HEK293T (cell line): ENCODE measurements at regions of chr22 and their contacts with region 1.

Region 1: DNA sequence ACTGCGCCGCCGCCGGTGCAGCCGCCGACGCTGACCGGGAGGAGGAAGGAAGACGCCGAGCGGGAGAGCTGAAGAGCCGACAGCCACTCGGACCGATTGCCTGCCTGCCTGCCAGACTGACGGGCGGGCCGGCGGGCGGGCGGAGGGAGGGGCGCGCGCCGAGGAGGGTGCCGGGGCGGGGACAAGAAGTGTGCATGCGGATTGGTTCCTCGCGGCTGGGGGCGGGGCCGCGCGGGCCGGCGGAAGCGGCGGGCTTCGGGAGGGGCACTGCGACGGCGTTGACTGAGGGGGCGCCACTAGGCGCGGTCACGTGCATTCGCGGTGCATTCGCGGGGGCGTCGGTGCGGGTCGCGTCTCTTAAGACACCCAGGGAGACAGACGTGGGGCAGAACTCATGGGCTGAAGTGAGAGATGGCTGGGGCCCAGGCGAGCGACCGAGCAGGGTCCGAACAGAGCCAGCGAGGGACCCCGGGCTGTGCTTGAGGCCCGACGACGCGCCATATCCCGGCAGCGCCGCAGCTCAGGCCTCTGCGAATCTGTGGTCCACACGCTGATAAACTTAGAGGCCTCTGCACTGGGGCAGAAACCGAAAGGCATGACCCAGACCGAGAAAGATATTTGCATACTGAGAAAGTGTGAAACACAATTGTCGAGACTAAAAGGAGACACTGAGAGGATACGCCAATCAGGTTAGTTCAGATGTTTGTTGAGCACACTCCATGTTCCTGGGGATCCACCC is at the start of gene MAPK1:
- DNase-seq: peak; percentile 98

Region 2: GRCh38 chr22:21857481-21857914 is 10.2 kb before region 1 on chr22:
- CTCF ChIA-PET with region 1: no interaction called
- POLR2A ChIA-PET with region 1: interaction called, 11 read pairs
- DNase-seq: no peak